Transverse colon (tissue), 4 donors: ENCODE measurements at regions of chr2 and their contacts with region 1.

Region 1: DNA sequence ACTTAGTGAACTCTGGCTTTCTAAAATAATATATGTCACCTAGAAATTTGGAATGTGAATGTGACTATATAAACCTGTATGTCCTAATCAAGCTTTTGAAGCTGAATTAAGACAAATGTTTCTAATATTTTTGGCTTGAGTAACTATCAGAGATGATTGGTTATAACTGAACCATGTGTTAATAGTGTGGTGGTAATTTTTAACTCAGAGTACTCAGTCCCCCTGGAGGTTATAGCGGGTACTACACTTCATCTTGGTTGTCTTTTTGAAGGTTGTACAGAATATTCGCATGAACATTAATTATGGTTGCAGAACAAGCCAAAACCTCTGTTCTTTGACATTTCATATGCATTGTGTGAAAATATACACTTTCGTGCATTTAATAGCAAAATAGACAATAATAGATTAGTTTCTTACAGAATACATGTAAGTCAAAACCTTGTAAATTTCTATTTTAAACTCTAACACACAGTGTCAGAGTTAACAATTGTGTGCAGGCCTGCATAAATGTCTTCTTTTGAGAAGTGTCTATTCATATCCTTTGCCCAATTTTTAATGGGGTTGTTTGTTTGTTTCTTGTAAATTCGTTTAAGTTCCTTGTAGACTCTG is 86.0 kb downstream of the OSBPL6 start:
- DNase-seq: no peak
- H3K4me3 ChIP-seq: no peak overlapping the region
- H3K27ac ChIP-seq: no peak overlapping the region
- H3K4me1 ChIP-seq: peaks cover 0 to 33% (median 19%) of the 10 kb centered on the region in 4 donors
- H3K27me3 ChIP-seq: no peaks in the 10 kb centered on the region
- CTCF ChIP-seq: peak; percentile 65 to 81 (median 73)
- EP300 ChIP-seq: no peak
- POLR2A ChIP-seq: no peak

Region 2: DNA sequence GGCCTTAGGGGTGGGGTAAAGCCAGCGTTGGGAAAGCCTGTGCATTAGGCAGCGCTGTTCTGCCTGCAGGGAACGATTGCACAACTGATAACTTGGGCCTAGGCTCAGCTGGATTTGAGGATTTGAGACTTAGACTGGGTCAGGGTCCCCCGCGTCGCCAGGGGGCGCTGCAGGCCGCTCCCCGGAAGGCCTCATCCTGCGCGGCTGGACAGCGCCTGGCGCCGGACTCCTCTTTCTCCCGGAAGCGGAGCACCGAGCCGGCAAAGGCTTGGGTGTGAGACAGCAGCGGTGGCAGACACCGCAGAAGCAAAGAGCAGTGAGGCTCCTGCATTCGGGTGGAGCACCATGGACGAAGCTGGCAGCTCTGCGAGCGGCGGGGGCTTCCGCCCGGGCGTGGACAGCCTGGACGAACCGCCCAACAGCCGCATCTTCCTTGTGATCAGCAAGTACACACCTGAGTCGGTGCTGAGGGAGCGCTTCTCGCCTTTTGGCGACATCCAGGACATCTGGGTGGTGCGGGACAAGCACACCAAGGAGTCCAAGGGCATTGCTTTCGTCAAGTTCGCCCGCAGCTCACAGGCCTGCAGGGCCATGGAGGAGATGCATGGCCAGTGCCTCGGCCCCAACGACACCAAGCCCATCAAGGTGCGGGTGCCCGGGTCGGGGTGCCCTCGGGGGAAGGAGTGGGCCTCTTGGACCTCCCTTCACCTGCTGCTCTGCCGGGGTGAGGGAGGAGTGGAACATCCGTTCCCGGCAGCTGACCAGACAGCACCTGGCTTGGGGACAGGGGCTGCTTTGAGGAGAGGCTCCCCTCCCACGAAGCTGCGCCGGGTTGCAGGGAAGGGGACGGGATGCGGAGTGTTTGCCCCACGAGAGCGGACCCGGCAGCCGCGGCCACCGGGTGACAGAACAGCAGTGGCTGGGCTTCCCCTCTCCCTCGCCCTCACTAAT is 167.9 kb before region 1 on chr2 and contains the start of gene RBM45:
- in situ Hi-C with region 1: loop called in 1 of 4 experiments (anchors 25 kb)
- intact Hi-C with region 1: no loop called
- DNase-seq: peak; percentile 95
- H3K4me3 ChIP-seq: peak within 1 kb of the TSS; percentile 72 to 84 (median 76)
- H3K27ac ChIP-seq: peak within 1 kb of the TSS; percentile 82 to 92 (median 88)
- H3K4me1 ChIP-seq: peaks cover 0 to 15% (median 8%) of the 10 kb centered on the region in 4 donors
- H3K27me3 ChIP-seq: no peaks in the 10 kb centered on the region
- CTCF ChIP-seq: peak; percentile 88 to 99 (median 97)
- EP300 ChIP-seq: no peak
- POLR2A ChIP-seq: peak; percentile 80
- total RNA-seq, gene RBM45: 6.4 to 20.3 (median 14.9) TPM

Region 3: DNA sequence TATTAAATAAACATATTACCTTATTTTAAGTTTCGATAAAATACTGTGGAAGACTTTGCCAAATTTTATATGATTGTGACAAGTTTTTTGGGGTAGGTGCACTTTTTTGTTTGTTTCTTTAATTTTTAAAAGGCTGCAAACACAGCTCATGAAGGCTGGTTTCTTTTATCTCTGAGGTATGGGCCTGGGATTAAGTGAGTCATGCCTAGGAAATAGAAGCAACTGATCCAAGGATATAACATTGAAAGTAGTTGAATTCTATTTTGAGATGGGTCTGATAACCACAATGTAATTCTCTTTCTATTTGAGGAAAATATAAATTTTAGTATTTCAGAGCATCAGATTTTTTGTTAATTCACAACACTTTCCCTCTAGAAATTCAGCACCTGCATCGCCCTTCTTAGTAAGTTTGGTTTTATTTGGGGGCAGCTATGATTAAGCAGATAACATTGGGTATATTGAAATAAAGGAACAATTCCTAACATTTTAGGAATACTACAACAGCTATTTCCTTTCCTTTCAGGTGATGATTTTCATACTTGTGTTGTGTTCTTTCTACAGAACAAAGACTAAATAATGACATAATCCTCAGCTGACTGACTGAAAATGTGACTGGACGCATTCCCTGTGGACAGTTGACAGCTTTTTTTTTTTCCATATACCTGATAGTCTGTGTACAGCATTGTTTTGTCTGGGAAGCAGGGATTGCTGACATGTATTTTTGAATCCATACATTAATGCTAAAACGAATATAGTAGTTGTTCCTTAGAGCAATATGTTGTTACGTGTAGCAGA is 151.3 kb before region 1 on chr2:
- in situ Hi-C with region 1: loop called in 3 of 4 experiments (anchors 10 to 25 kb)
- intact Hi-C with region 1: loop called (anchors 5 kb)
- DNase-seq: no peak
- H3K4me3 ChIP-seq: no peak overlapping the region
- H3K27ac ChIP-seq: no peak overlapping the region
- H3K4me1 ChIP-seq: no peaks in the 10 kb centered on the region
- H3K27me3 ChIP-seq: no peaks in the 10 kb centered on the region
- CTCF ChIP-seq: no peak
- EP300 ChIP-seq: no peak
- POLR2A ChIP-seq: no peak

Region 4: DNA sequence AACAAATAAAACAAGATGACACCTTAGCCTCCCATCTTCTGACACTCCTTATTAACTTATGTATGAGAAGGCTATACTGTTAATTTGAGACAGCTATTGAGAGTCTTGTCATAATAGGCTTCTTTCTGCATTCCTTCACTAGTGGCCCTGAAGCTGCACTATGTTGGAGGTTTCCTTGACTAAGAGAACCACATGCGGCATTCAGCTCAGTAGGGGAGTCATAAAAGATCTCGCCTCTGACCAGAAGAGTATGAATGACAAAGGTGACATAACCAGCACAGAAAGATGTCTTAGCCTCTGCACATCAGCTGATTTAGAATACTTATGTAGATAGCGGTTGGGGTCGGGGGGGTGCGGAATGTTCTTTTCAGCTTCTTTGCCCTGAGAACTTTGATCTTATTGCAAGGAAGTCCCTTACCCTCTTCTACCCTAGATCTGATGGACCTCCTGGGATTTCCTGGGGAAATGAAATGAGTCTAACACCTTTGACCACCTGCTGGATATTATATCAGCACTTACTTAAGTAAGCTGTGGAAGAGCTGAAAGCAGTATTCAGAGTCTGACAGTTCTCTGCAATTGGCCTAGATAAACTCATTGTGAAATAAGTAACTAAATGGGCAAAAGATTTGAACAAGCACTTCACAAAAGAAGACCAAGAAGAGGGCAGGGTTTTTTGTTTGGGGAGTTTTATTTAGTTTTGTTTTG is 143.9 kb before region 1 on chr2:
- in situ Hi-C with region 1: loop called in 2 of 4 experiments (anchors 10 to 25 kb)
- intact Hi-C with region 1: loop called (anchors 5 kb)
- DNase-seq: no peak
- H3K4me3 ChIP-seq: no peak overlapping the region
- H3K27ac ChIP-seq: no peak overlapping the region
- H3K4me1 ChIP-seq: no peaks in the 10 kb centered on the region
- H3K27me3 ChIP-seq: no peaks in the 10 kb centered on the region
- CTCF ChIP-seq: no peak
- EP300 ChIP-seq: no peak
- POLR2A ChIP-seq: no peak

Region 5: GRCh38 chr2:178142274-178143065 is 137.9 kb before region 1 on chr2:
- in situ Hi-C with region 1: loop called in 2 of 4 experiments (anchors 10 to 25 kb)
- intact Hi-C with region 1: no loop called
- DNase-seq: no peak
- H3K4me3 ChIP-seq: no peak overlapping the region
- H3K27ac ChIP-seq: no peak overlapping the region
- H3K4me1 ChIP-seq: peaks cover 0 to 8% (median 2%) of the 10 kb centered on the region in 4 donors
- H3K27me3 ChIP-seq: peaks cover 18% of the 10 kb centered on the region
- CTCF ChIP-seq: no peak
- EP300 ChIP-seq: no peak
- POLR2A ChIP-seq: no peak

Region 6: DNA sequence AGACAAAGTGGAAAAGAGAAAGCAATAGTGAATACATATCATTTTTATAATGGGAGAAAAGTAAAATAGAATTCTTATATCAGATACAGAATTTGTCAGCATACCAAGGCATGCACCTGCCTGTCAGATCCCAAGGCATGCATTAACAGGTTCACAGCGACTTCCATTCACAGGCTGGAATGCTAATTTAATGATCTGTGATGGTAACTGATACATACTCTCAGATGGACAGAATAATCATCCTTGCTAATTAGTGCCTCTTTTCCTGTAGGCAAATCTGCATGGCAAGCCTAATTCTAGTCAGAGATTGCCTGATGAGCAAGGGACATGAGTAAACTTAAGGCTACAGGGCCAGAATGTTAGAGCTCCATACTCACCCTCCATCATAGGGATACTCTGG is 94.5 kb after region 1 on chr2:
- in situ Hi-C with region 1: no loop called
- intact Hi-C with region 1: no loop called
- DNase-seq: no peak
- H3K4me3 ChIP-seq: no peak overlapping the region
- H3K27ac ChIP-seq: no peak overlapping the region
- H3K4me1 ChIP-seq: no peaks in the 10 kb centered on the region
- H3K27me3 ChIP-seq: no peaks in the 10 kb centered on the region
- CTCF ChIP-seq: no peak
- EP300 ChIP-seq: no peak
- POLR2A ChIP-seq: no peak

Region 7: DNA sequence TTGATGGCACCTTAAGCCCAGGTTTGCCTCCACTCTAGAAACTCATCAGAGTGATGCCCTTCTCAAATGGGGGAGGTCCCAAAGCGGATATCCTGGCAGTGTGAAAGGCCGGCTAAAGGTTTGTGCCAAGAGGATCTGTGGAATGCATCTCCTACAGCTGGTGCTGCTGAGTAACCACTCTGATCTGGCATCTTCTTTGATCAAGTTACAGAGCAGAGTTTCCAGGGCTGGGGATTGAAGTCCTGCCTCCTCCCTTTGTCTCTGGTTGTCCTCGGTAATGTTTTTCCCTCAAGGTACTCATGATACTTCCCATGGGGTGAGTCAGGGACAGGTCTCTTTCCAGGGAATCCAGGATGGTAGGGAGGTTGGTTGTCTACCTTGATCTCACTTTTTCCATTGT is 146.0 kb after region 1 on chr2:
- in situ Hi-C with region 1: no loop called
- intact Hi-C with region 1: no loop called
- DNase-seq: no peak
- H3K4me3 ChIP-seq: no peak overlapping the region
- H3K27ac ChIP-seq: no peak overlapping the region
- H3K4me1 ChIP-seq: no peaks in the 10 kb centered on the region
- H3K27me3 ChIP-seq: no peaks in the 10 kb centered on the region
- CTCF ChIP-seq: no peak
- EP300 ChIP-seq: no peak
- POLR2A ChIP-seq: no peak